B cell (primary cell): ENCODE measurements at regions of chr3 and their contacts with region 1.

Region 1: GRCh38 chr3:176927706-176928581 is 269.3 kb downstream of the TBL1XR1 start:
- DNase-seq: no peak
- ATAC-seq: no peak
- H3K4me3 ChIP-seq: no peak overlapping the region
- H3K4me3 Mint-ChIP-seq: no peak overlapping the region
- H3K27ac ChIP-seq: no peak overlapping the region
- H3K27ac Mint-ChIP-seq: no peak overlapping the region
- H3K4me1 ChIP-seq: no peaks in the 10 kb centered on the region
- H3K4me1 Mint-ChIP-seq: no peaks in the 10 kb centered on the region
- H3K27me3 ChIP-seq: peaks cover 0 to 3% (median 0%) of the 10 kb centered on the region in 4 experiments
- H3K27me3 Mint-ChIP-seq: peaks cover 3% of the 10 kb centered on the region
- CTCF ChIP-seq: no peak

Region 2: GRCh38 chr3:176848431-176849214 is 79.3 kb before region 1 on chr3:
- CTCF ChIA-PET with region 1: no interaction called
- POLR2A ChIA-PET with region 1: no interaction called
- intact Hi-C with region 1: no loop called
- DNase-seq: no peak
- ATAC-seq: no peak
- H3K4me3 ChIP-seq: no peak overlapping the region
- H3K4me3 Mint-ChIP-seq: no peak overlapping the region
- H3K27ac ChIP-seq: no peak overlapping the region
- H3K27ac Mint-ChIP-seq: no peak overlapping the region
- H3K4me1 ChIP-seq: no peaks in the 10 kb centered on the region
- H3K4me1 Mint-ChIP-seq: no peaks in the 10 kb centered on the region
- H3K27me3 ChIP-seq: no peaks in the 10 kb centered on the region
- H3K27me3 Mint-ChIP-seq: peaks cover 1% of the 10 kb centered on the region
- CTCF ChIP-seq: no peak

Region 3: GRCh38 chr3:176939022-176939817 is 11.3 kb after region 1 on chr3:
- CTCF ChIA-PET with region 1: interaction called, 12 read pairs
- POLR2A ChIA-PET with region 1: no interaction called
- intact Hi-C with region 1: no loop called
- DNase-seq: peak; percentile 45
- ATAC-seq: peak; percentile 58
- H3K4me3 ChIP-seq: no peak overlapping the region
- H3K4me3 Mint-ChIP-seq: no peak overlapping the region
- H3K27ac ChIP-seq: no peak overlapping the region
- H3K27ac Mint-ChIP-seq: no peak overlapping the region
- H3K4me1 ChIP-seq: no peaks in the 10 kb centered on the region
- H3K4me1 Mint-ChIP-seq: no peaks in the 10 kb centered on the region
- H3K27me3 ChIP-seq: peaks cover 0 to 2% (median 0%) of the 10 kb centered on the region in 4 experiments
- H3K27me3 Mint-ChIP-seq: peaks cover 15% of the 10 kb centered on the region
- CTCF ChIP-seq: peak; percentile 87